ENCODE measurements at regions of chr16 and their contacts with region 1.

Region 1: DNA sequence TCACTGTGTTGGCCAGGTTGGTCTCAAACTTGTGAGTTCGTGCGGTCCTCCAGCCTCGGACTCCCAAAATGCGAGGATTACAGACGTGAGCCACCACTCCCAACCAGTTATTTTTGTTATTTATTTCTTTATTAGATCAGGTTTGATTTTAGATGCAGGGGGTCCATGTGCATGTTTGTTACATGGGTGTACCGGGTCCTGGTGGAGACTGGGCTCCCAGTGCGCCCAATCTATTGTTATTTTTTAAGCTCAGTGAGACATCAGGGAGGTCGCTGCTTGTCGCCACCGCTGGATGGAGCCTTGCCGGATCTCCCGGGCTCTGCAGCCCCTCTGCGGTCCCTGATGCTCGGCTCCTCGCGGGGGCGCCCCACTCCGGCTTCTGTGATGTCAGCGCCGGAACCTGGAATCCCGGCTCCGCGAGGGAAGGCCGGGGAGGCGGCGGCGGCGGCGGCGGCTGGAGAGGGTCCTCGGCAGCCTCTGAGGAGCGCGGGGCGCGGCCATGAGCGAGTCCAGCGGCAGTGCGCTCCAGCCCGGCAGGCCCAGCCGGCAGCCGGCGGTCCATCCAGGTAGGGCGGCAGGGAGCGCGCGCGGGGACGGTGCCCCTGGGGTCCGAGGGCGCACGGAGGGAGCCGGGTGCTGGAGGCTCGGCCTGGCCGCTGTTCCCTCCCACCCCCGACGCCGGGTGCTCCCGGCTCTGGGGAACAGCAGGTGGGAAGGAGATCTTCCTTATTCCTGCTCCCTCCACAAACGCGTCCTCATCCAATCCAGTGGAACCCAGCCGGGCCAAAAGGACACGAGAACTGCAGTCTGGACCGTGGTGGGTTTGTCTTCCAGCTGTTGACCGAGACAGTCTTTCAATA is at the start of gene TMC7:
- DNase-seq: peak; percentile 47 to 78
- H3K4me3 ChIP-seq: peak within 1 kb of the TSS; percentile 49 to 59
- H3K27ac ChIP-seq: peak within 1 kb of the TSS; percentile 16 to 28
- H3K4me1 ChIP-seq: peaks cover 0 to 11% (median 8%) of the 10 kb centered on the region in 4 donors
- H3K27me3 ChIP-seq: peaks cover 0 to 7% of the 10 kb centered on the region in 2 donors
- CTCF ChIP-seq: peak; percentile 51 to 57

Region 2: GRCh38 chr16:19067349-19068236 is 83.8 kb after region 1 on chr16 and contains the start of gene COQ7:
- intact Hi-C with region 1: loop called (anchors 10 kb)
- DNase-seq: peak; percentile 99
- H3K4me3 ChIP-seq: peak within 1 kb of the TSS; percentile 80 to 81
- H3K27ac ChIP-seq: peak within 1 kb of the TSS; percentile 98 to 99
- H3K4me1 ChIP-seq: peaks cover 0 to 19% (median 13%) of the 10 kb centered on the region in 4 donors
- H3K27me3 ChIP-seq: no peaks in the 10 kb centered on the region
- CTCF ChIP-seq: peak in 1 of 2 experiments; percentile 17

Measured in tibial artery (tissue), 4 donors.